Endothelial cell of umbilical vein (primary cell): ENCODE measurements at regions of chr6 and their contacts with region 1.

Region 1: GRCh38 chr6:144008120-144008811 is at the start of gene PLAGL1:
- DNase-seq: peak; percentile 57
- H3K4me3 ChIP-seq: peak within 1 kb of the TSS; percentile 63 to 90 (median 66)
- H3K27ac ChIP-seq: peak within 1 kb of the TSS; percentile 8
- H3K4me1 ChIP-seq: peaks cover 3% of the 10 kb centered on the region
- H3K27me3 ChIP-seq: peaks cover 4 to 5% of the 10 kb centered on the region in 2 experiments
- CTCF ChIP-seq: no peak
- POLR2A ChIP-seq: peak; percentile 72
- total RNA-seq, gene PLAGL1: 40.0 and 40.4 TPM in 2 replicates

Region 2: GRCh38 chr6:143123081-143123480 is 885.2 kb before region 1 on chr6:
- CTCF ChIA-PET with region 1: no interaction called
- POLR2A ChIA-PET with region 1: no interaction called
- dilution Hi-C with region 1: no loop called
- intact Hi-C with region 1: loop called (anchors 5 kb)
- DNase-seq: no peak
- H3K4me3 ChIP-seq: no peak overlapping the region
- H3K27ac ChIP-seq: no peak overlapping the region
- H3K4me1 ChIP-seq: no peaks in the 10 kb centered on the region
- H3K27me3 ChIP-seq: no peaks in the 10 kb centered on the region
- CTCF ChIP-seq: no peak
- POLR2A ChIP-seq: no peak

Region 3: DNA sequence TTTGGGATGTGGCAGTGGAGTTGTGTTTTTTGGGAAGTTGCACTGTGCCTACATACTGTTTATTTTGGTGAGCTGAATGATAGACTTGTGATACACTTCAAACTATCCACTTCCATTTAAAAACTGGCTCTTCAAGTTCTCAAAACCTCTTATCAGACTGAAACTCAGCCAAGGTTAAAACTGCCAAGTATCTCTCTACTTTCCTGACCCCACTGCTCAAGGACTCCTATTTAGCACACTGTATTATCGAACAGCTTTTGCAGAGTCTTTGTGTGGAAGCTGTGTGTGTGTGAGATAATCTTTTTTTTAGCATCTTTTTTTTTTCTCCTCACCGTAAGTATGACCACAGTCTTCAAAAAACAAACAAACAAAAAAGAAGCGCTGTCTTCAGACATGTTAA is 163.1 kb after region 1 on chr6:
- CTCF ChIA-PET with region 1: no interaction called
- POLR2A ChIA-PET with region 1: no interaction called
- dilution Hi-C with region 1: no loop called
- intact Hi-C with region 1: no loop called
- DNase-seq: no peak
- H3K4me3 ChIP-seq: no peak overlapping the region
- H3K27ac ChIP-seq: no peak overlapping the region
- H3K4me1 ChIP-seq: no peaks in the 10 kb centered on the region
- H3K27me3 ChIP-seq: no peaks in the 10 kb centered on the region
- CTCF ChIP-seq: no peak
- POLR2A ChIP-seq: no peak